ENCODE measurements at regions of chrX and their contacts with region 1.

Region 1: GRCh38 chrX:85516131-85516530 is 136.7 kb upstream of the POF1B start:
- DNase-seq: peak; percentile 84
- H3K4me3 ChIP-seq: no peak overlapping the region
- H3K27ac ChIP-seq: peak overlapping the region; percentile 68
- H3K4me1 ChIP-seq: peaks cover 8% of the 10 kb centered on the region
- H3K27me3 ChIP-seq: no peaks in the 10 kb centered on the region
- CTCF ChIP-seq: no peak

Region 2: DNA sequence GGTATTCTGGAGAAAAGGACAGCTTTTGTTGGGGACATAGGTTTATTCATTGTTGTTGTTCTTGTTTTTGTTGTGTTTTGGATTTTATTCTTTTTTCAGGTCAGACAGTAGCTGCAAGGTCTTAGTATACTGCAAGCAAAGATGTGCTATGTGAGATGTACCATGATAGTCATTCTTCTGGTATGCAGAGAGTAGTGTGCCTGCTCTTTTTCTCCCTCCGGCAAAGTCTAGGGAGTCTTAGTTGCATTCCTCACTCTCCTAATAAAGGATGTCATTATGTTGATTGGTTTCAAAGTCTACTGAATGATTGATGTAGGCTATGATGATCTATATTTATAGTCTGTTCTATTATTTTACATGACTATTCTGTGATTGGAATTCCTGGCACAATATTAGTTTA is 16.7 kb before region 1 on chrX:
- CTCF ChIA-PET with region 1: no interaction called
- dilution Hi-C with region 1: no loop called
- in situ Hi-C with region 1: no loop called
- intact Hi-C with region 1: loop called (anchors 2 kb)
- DNase-seq: peak; percentile 62
- H3K4me3 ChIP-seq: peak overlapping the region in 1 of 3 experiments; percentile 11
- H3K27ac ChIP-seq: no peak overlapping the region
- H3K4me1 ChIP-seq: peaks cover 32% of the 10 kb centered on the region
- H3K27me3 ChIP-seq: no peaks in the 10 kb centered on the region
- CTCF ChIP-seq: no peak